Right cardiac atrium (tissue), 5 donors: ENCODE measurements at regions of chr9 and their contacts with region 1.

Region 1: DNA sequence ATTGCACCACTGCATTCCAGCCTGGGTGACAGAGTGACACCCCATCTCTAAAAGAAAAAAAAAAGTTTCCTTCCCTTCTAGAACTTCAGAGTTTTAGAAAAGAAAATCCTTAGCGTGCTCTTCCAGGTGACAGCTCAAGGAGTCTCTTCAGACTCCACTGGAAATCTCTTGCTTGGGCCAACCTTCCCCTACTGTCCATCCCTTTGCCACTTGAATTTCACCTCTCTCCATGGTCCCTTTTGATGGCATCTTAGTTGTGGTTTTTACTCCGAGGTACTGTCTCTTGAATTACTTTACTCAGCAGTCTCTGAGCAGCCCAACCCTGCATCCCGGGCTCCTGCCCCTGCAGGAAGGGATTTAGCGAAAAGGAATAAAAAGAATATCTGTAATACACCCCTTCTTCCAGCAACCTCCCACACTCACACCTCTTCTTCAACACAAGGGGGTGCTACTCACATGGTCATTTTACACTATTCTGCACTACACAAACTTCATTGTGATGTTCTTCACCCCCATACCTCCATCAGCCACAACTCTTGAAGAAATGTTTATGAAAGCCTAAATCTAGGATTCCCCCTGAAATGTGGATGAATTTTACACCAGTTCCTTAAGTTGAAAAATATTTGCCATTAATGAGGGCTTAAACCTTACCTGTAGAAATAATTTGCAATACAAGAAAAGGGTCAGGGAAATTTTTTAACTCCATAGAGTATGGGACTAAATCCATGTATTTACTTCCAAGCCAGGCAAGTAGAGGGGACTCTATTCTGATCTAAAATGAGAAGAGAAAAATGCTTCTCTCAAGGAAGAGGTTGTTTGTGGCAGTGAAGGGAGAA is 25.9 kb downstream of the TPD52L3 start:
- DNase-seq: no peak
- ATAC-seq: peak; percentile 86 to 89
- H3K4me3 ChIP-seq: no peak overlapping the region
- H3K27ac ChIP-seq: no peak overlapping the region
- H3K4me1 ChIP-seq: no peaks in the 10 kb centered on the region
- H3K27me3 ChIP-seq: no peaks in the 10 kb centered on the region

Region 2: DNA sequence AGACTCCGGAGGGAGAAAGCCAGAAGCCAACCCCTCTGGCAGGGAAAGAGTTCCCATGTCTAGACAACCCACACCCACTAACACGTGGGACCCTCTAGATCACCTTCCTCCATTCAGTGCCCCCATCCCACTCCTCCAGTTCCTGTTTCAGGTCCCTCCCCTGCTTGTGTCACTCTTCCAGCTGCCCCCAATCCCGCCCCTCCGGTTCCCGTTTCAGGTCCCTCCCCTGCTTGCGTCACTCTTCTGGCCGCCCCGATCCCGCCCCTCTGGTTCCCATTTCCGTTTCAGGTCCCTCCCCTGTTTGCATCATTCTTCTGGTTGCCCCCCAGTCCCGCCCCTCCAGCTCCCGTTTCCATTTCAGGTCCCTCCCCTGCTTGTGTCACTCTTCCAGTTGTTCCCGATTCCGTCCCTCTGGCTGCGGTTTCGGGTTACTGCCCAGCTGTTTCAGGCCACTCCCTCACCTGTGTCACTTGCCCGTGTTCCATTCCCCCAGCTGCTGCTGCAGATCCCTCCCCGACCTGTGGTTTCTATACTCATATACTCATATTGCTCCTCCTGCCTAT is 273.8 kb before region 1 on chr9:
- intact Hi-C with region 1: no loop called
- DNase-seq: peak; percentile 90 to 95 (median 91)
- ATAC-seq: peak; percentile 98 to 99
- H3K4me3 ChIP-seq: peak overlapping the region; percentile 60
- H3K27ac ChIP-seq: peak overlapping the region; percentile 39
- H3K4me1 ChIP-seq: no peaks in the 10 kb centered on the region
- H3K27me3 ChIP-seq: no peaks in the 10 kb centered on the region

Region 3: GRCh38 chr9:6566409-6567139 is 212.5 kb after region 1 on chr9:
- intact Hi-C with region 1: loop called (anchors 2 to 10 kb)
- DNase-seq: peak in 1 of 3 donors; percentile 50
- ATAC-seq: peak; percentile 32 to 77
- H3K4me3 ChIP-seq: no peak overlapping the region
- H3K27ac ChIP-seq: no peak overlapping the region
- H3K4me1 ChIP-seq: peaks cover 3% of the 10 kb centered on the region
- H3K27me3 ChIP-seq: no peaks in the 10 kb centered on the region

Region 4: DNA sequence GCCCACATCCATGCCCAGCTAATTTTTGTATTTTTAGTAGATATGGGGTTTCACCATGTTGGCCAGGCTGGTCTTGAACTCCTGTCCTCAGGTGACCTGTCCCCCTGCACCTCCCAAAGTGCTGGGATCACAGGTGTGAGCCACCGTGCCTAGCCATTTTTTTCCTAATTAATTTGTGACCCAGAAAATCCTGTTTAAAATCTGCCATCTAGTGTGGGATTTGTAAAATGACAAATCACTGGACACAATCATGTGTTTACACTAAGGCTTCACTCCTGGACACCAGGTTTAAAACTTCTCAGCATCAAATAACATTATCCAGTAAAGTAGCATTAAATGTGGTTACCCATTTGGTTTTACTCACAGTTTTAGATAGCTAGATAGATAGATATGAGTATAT is 385.1 kb after region 1 on chr9:
- intact Hi-C with region 1: loop called in 1 of 4 experiments (anchors 5 kb)
- DNase-seq: no peak
- ATAC-seq: no peak
- H3K4me3 ChIP-seq: no peak overlapping the region
- H3K27ac ChIP-seq: no peak overlapping the region
- H3K4me1 ChIP-seq: no peaks in the 10 kb centered on the region
- H3K27me3 ChIP-seq: no peaks in the 10 kb centered on the region